Lower leg skin (tissue), 4 donors: ENCODE measurements at regions of chr1 and their contacts with region 1.

Region 1: DNA sequence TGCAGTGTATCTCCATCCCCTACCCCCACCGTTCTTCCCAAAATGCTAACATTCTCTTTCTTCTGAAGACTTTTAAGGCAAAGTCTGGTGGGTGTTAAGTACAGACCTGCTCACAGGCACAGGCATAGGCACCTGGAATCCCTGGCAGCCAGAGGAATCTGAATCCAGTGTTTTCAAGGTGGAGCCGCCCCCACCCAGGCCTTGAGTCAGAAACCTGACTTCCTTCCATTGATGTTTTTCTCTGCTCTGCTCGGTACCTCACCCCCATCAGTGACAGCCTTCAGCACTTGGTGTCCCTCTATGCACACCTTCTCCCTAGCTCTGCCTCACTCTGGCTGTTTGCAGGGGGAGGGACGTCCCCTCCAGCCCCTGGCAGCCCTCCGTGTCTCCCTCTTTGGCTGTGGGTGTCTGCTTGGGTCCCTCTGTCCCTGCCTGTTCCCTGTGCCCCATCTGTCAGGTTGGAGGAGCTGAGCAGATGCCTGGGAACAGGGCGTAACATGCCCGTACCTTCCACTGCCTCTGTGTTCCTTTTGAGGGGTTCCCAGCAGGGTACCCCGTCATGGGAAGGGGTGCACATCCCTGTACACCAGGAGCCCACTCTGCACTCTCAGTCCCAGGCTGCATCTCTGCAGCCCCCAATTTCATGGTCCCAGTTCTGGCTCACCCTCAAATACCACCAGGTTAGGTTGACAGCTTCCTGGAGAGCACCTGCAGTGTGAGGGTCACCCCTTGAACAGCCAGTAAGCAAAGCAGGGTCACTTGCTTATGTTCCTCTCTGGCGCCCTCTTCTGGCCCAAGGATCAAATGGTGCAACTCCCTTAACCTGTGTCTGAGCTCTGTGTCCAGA is 6.7 kb downstream of the NCDN start:
- DNase-seq: peak; percentile 69 to 96
- H3K4me3 ChIP-seq: no peak overlapping the region
- CTCF ChIP-seq: no peak
- POLR2A ChIP-seq: no peak

Region 2: DNA sequence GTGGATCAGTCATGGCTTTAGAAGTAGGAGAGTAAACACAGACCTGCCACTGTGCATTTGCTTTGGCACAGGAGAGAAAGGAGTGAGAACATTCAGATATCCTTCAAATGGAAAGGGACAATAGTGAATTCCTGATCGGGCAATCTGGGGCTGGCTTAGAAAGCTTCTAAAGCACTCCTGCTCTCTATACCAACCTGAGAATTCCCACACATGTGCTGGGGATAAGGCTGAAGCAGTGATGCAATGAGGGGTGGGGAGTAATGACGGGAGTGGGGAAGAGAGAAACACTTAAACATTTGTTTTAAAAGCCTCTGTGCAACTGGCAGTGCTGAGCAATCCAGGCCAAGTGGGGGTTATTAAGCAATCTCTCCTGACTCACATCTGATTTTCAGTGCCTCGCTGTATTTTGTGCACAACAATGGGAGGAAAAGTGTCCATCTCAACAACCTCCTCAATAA is 115.9 kb before region 1 on chr1:
- intact Hi-C with region 1: loop called (anchors 2 kb)
- DNase-seq: peak in 1 of 2 donors; percentile 38
- H3K4me3 ChIP-seq: no peak overlapping the region
- CTCF ChIP-seq: no peak
- POLR2A ChIP-seq: no peak

Region 3: DNA sequence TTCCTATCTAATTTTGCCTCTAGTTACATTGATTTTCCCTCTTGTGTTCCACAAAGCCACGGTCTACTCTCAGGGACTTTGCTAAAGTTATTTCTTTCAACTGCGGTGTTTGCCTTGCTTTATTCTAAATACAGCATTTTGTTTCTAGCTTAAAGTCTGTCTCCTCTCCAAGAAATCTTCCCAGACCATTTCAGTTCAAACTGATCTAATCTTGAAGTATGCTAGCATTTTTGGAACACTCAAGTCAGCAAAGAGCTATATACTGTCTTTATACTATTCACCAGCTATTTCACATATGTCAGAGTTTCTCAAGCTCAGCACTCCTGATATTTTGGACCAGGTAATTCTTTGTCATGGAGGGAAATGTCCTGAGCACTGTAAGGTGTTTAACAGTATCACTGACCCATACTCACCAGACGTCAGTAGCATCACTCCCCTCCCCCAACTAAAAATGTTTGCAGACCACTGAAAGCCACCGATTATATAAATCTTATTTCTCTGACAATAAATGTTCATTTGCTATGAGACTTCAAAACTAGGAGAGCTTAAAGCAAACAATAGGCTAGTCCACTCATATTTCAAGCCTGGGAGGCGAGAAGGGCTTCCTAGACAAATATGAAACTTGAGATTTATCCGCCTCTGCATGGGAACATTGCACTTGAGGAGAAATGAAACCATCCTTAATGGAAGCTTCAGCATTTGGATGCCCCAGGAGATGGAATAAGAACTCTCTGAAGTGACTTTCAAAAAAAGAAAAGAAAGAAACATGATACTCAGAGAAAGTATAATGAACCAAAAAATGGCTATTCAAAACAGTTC is 88.2 kb before region 1 on chr1:
- intact Hi-C with region 1: no loop called
- DNase-seq: no peak
- H3K4me3 ChIP-seq: no peak overlapping the region
- CTCF ChIP-seq: no peak
- POLR2A ChIP-seq: no peak

Region 4: DNA sequence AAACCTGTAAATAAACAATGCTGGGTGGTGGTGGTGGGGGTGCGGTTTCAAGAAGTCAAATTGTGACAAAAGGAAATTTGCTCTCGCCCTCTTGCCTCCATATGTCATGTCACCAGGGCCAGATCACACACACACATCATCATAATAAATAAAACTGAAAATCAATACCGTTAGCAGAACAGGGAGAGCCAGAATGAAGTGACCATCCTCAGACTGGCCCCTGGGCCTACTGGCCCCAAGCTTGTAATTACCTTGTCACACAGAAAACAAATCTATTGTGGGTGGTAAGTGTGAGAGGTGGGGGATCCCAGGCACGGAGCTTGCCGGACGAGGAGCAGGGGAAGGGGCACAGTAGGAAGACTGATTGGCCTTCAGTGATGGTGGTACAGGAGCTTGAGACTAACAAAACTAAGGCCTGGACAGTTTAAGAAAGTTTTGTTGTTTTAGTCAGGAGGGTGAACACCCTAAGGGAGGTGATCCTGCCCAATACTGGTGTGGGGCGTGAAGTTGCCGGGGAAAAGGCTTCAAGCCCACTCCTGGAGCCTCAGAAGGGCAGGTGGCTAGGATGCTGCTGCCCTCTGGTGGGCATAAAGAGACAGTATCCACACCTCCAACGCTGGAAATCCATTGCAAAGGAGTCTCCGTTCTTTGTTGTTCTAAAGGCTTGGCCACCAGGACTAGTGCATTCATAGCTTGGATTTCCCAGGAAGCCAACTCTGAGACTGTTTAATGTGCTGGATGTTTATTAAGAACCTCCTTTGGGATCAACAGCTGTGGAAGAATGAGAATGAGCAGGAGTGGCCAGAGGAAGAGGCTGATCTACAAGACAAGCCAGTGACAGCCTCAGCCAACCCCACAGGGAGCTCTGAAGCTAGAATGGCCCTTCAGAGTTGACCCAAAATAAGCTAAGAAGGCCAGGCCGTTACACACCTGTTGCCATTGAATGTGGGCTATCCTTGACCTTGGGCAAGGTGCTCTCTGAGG is 162.5 kb after region 1 on chr1:
- intact Hi-C with region 1: loop called (anchors 5 kb)
- DNase-seq: peak in 1 of 2 donors; percentile 84
- H3K4me3 ChIP-seq: no peak overlapping the region
- CTCF ChIP-seq: no peak
- POLR2A ChIP-seq: no peak

Region 5: DNA sequence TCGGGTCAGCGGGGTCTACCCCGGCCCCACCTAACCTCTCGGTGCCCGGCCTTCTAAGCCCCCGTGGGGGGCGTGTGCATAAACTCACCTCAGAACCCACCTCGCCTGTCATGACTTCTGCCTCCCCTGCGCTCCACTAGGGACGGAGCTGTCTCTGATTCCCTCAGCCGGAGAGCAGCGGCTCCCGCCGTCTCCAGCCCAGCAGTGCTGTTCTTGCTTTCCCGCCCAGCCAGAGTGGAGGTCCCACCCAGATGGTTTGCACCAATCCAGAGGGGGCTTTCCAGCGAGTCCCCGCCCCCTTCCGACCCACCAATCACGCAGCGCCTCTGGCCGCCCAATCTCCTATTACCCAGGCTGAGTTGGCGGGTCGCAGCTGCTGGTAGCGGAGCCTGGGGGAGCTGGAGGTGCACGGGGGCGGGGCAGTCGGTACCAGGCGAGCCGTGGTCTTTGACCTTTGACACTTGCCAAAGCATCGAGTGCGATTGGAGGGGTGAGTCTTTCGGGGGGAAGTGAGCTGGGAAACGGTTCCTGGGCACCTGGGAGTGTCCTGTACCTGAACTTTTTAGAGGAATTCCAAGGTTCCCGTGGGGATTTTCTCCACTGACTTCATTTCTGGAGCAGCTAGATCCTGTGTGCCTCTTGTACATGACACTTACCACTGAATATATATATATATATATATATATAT is 205.6 kb after region 1 on chr1 and contains the start of gene CLSPN:
- intact Hi-C with region 1: loop called (anchors 5 kb)
- DNase-seq: peak; percentile 93 to 98
- H3K4me3 ChIP-seq: peak within 1 kb of the TSS; percentile 47
- CTCF ChIP-seq: no peak
- POLR2A ChIP-seq: no peak
- total RNA-seq, gene CLSPN: 0.32 to 0.37 (median 0.34) TPM in 3 of 4 donors, not detected in the other

Region 6: DNA sequence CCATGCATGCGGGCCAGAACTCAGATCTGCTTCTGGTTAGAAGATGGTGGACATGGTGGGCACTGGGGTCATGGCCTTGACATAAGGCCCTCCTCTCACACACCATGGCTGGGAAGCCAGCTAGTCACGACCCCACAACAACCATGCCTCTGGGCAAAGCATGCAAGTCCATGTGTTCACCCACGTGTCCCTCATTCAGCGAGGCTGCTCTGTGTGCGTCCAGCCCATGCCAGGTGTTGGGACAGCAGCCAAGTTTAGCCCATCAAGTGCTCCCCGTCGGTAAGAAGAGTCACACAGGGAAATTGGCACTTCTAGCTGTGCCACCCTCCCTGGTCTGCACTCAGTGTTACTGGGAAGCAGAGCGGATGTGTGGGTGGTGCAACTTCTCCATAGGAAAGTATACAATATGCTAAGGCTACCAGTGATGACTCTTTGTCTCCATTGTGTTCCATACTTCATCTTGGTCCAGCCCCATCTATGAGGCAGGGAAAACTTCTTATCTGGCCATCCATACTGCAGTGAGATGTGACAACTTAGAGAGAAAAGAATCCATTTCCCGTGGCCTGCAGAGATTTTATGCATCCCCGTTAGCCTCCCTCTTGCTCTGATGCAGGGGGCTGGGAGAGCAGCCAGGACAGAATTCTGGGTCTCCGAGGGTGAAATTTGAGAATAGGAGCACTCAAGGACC is 1272.1 kb after region 1 on chr1:
- intact Hi-C with region 1: no loop called
- DNase-seq: no peak
- H3K4me3 ChIP-seq: no peak overlapping the region
- CTCF ChIP-seq: no peak
- POLR2A ChIP-seq: no peak